ENCODE measurements at regions of chr7 and their contacts with region 1.

Region 1: GRCh38 chr7:44348300-44348699 is 22.9 kb upstream of the CAMK2B start:
- DNase-seq: peak; percentile 67
- H3K4me3 ChIP-seq: no peak overlapping the region
- H3K27ac ChIP-seq: no peak overlapping the region
- H3K4me1 ChIP-seq: no peaks in the 10 kb centered on the region
- H3K27me3 ChIP-seq: peaks cover 9 to 23% of the 10 kb centered on the region in 2 experiments
- CTCF ChIP-seq: peak; percentile 57 to 82
- POLR2A ChIP-seq: no peak

Region 2: DNA sequence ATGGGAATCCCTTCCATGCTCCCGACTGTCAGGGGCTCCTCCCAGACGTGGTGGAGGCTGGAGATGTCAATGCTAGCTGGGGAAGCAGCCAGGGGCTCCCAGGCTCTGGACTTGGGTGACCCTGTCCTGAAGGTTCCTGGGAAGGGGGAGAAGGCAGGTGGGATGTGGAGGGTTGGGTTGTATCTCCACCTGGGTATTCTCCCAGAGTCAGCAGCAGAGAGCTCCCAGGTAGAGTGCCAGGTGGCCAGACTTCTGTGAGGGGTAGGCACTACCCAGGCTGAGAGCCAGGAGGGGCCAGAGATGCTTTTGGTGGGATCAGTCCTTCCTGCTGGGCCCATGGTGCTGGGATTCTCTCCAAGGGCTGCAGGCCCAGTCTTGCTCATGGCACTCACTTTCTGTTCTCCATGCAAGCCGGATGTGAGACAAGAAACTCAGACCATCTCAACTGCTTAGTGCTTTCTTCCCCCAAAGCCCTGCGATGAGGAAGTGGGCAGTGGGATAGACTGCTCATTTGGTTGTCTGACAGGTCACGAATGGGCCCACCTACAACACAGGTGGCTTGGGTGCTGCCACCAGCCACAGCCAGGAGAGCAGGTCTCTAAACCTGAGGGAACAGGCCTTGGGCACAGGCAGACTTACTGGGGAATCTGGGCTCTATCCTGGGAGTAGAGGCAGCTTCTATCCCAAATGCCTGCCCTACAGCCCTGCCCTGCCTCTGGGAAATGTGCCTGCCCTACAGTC is 29.6 kb after region 1 on chr7:
- CTCF ChIA-PET with region 1: interaction called, 10 read pairs
- POLR2A ChIA-PET with region 1: no interaction called
- dilution Hi-C with region 1: no loop called
- intact Hi-C with region 1: no loop called
- DNase-seq: no peak
- H3K4me3 ChIP-seq: no peak overlapping the region
- H3K27ac ChIP-seq: peak overlapping the region; percentile 71
- H3K4me1 ChIP-seq: peaks cover 51% of the 10 kb centered on the region
- H3K27me3 ChIP-seq: no peaks in the 10 kb centered on the region
- CTCF ChIP-seq: no peak
- POLR2A ChIP-seq: no peak

Region 3: DNA sequence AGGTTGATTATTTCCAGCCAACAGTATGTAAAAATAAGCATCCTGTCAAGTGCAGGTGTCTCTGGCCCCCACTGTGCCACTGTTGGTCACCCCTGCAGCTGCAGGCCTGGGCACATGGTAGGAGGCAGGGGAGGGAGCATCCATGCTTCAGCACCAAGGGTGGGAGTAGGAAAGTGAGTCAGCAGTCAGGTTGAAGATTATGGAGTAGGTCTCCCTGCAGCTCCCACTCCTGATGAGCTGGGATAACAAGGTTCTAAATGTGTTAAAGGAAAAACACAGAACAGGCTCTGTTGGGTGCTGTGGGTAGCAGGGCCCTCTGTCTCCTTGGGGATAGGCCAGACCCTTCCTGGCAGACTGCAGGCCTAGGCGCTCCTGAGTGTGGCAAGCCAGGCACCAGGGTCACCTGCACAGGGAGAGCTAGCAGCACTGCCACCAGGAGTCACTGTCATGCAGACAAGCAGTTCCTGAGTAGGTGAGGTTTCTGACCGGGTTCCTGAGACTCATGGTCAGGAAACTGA is 82.8 kb after region 1 on chr7:
- CTCF ChIA-PET with region 1: interaction called, 13 read pairs
- POLR2A ChIA-PET with region 1: no interaction called
- dilution Hi-C with region 1: no loop called
- intact Hi-C with region 1: no loop called
- DNase-seq: peak; percentile 19
- H3K4me3 ChIP-seq: no peak overlapping the region
- H3K27ac ChIP-seq: no peak overlapping the region
- H3K4me1 ChIP-seq: no peaks in the 10 kb centered on the region
- H3K27me3 ChIP-seq: no peaks in the 10 kb centered on the region
- CTCF ChIP-seq: no peak
- POLR2A ChIP-seq: no peak

Region 4: GRCh38 chr7:44471850-44472249 is 123.5 kb after region 1 on chr7:
- CTCF ChIA-PET with region 1: interaction called, 40 read pairs
- POLR2A ChIA-PET with region 1: no interaction called
- dilution Hi-C with region 1: no loop called
- intact Hi-C with region 1: loop called (anchors 1 kb)
- DNase-seq: no peak
- H3K4me3 ChIP-seq: no peak overlapping the region
- H3K27ac ChIP-seq: no peak overlapping the region
- H3K4me1 ChIP-seq: peaks cover 27% of the 10 kb centered on the region
- H3K27me3 ChIP-seq: no peaks in the 10 kb centered on the region
- CTCF ChIP-seq: no peak
- POLR2A ChIP-seq: no peak

Region 5: DNA sequence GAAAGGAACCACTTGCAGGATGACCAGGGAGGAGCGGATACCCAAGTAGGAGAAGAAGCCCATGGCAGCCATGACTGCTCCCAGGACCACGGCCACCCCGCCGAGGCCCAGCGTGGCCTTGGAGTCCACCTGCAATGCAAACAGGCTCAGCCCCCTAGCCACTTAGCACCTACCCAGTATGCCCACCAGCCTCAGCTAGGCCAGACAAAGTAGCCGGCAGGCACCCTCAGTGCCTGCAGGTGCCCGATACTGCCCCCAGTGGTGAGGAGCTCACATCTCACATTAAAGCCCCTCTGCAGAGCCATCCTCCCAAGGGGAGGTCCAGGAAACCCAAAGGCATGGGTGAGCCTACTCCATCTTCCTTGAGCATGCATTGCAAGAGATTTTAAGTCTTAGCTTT is 186.2 kb after region 1 on chr7:
- CTCF ChIA-PET with region 1: interaction called, 17 read pairs
- POLR2A ChIA-PET with region 1: no interaction called
- dilution Hi-C with region 1: no loop called
- intact Hi-C with region 1: no loop called
- DNase-seq: peak; percentile 21
- H3K4me3 ChIP-seq: no peak overlapping the region
- H3K27ac ChIP-seq: no peak overlapping the region
- H3K4me1 ChIP-seq: no peaks in the 10 kb centered on the region
- H3K27me3 ChIP-seq: no peaks in the 10 kb centered on the region
- CTCF ChIP-seq: peak; percentile 75 to 81
- POLR2A ChIP-seq: no peak

Region 6: DNA sequence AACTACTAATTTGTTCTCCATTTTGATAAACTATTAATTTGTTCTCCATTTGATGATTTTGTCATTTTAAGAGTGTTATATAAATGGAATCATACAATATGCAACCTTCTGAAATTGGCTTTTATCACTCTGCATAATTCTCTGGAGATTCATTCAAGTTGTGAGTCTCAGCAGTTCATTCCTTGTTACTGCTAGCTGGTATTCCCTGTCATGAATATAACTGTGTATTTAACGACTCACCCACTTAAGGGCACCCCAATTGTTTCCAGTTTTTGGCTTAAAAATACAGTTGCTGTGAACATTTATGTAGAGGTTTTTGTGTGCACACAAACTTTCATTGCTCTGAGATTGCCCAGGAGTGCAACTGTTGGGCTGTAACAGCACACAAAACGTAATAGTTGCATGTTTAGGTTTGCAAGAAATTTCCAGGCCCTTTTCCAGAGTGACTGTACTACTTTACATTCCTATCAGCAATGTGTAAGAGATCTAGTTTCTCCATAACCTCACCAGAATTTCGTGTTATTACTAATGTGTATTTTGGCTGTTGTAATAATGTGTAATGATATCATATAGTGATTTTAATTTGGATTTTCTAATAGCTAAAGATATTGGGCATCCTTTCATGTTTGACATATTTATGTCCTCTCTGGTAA is 1072.7 kb after region 1 on chr7:
- CTCF ChIA-PET with region 1: no interaction called
- POLR2A ChIA-PET with region 1: no interaction called
- dilution Hi-C with region 1: no loop called
- intact Hi-C with region 1: no loop called
- DNase-seq: no peak
- H3K4me3 ChIP-seq: no peak overlapping the region
- H3K27ac ChIP-seq: no peak overlapping the region
- H3K4me1 ChIP-seq: no peaks in the 10 kb centered on the region
- H3K27me3 ChIP-seq: no peaks in the 10 kb centered on the region
- CTCF ChIP-seq: no peak
- POLR2A ChIP-seq: no peak